ENCODE measurements at regions of chr15 and their contacts with region 1.

Region 1: GRCh38 chr15:66851226-66852071 is 149.4 kb downstream of the SMAD6 start:
- DNase-seq: peak; percentile 89
- H3K4me3 ChIP-seq: peak overlapping the region in 1 of 2 experiments; percentile 44; a peak in 1 of 4 replicates
- H3K27ac ChIP-seq: peak overlapping the region; percentile 34 to 42; a peak in 3 of 4 replicates
- H3K4me1 ChIP-seq: peaks cover 6 to 15% of the 10 kb centered on the region in 2 experiments; a peak in 2 of 4 replicates
- H3K27me3 ChIP-seq: no peaks in the 10 kb centered on the region
- CTCF ChIP-seq: peak; percentile 71
- EP300 ChIP-seq: no peak
- RAD21 ChIP-seq: peak; percentile 61

Region 2: DNA sequence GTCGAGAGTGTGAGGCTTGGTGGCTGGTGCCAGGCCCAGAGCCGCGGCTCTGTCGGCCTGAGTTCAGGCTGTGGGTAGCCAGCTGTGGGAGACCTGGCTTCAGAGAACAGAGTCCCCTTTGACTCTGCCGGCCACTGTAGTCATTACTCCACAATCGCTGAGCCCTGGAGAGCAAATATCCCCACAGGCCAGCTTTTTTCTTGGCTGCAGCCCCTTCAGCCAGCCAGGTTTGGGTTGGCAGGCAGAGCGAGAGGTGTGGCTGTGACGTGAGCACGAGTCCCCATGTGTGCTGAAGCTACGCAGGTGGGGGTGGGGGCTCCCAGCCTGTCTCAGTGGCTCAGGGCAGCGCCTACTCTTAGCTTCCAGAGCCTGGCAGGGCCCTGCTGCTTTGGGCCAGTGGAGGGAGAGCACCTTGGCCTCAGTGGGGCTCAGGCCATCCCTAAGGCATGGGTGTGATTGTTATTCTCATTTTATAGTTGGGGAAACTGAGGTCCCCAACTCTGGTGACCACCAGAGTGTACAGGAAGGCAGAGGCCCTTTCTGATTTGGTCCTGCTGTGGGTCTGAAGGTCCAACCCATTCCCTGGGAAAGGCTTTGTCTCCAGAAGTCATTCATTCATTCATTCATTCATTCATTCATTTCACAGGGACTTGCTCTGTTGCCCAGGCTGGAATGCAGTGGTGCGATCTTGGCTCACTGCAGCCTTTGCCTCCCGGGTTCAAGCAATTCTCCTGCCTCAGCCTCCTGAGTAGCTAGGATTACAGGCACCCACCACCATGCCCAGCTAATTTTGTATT is 240.0 kb before region 1 on chr15:
- CTCF ChIA-PET with region 1: interaction called, 84 read pairs
- POLR2A ChIA-PET with region 1: no interaction called
- DNase-seq: no peak
- H3K4me3 ChIP-seq: no peak overlapping the region
- H3K27ac ChIP-seq: no peak overlapping the region
- H3K4me1 ChIP-seq: peaks cover 0 to 2% of the 10 kb centered on the region in 2 experiments; a peak in 1 of 4 replicates
- H3K27me3 ChIP-seq: no peaks in the 10 kb centered on the region
- CTCF ChIP-seq: no peak
- EP300 ChIP-seq: no peak
- RAD21 ChIP-seq: no peak

Region 3: DNA sequence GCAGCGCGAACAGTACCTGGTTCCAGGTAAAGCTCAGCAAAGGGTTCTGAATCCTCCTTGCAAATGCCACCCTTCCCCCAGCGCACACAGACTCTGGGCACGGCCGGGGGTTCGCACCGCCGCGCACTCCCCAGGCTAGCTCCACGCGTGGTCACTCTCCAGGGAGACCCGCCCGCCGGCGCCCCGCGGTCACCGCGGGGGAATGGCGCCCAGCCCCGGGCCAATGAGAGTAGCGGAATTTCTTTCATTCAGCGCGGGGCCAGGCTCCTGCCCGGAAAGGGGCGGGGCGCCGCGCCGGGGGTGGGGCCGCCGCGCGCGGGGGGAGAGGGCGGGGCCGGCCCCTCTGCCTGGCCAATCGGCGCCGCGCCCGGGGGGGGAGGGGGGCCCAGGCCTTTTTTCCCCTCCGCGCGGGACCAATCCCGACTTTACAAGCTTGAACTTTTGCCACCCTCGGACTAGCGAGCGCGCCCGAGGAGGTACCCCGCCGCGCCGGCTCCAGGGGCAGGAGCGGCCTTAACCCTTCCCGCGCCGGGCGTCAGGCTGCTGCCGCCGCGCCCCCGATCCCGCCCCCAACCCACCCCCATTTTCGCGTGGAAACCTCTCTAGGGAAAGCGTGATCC is 150.5 kb before region 1 on chr15:
- CTCF ChIA-PET with region 1: interaction called, 25 read pairs
- POLR2A ChIA-PET with region 1: no interaction called
- DNase-seq: peak; percentile 98
- H3K4me3 ChIP-seq: peak overlapping the region; percentile 68 to 73
- H3K27ac ChIP-seq: peak overlapping the region; percentile 89
- H3K4me1 ChIP-seq: peaks cover 23 to 24% of the 10 kb centered on the region in 2 experiments; a peak in 3 of 4 replicates
- H3K27me3 ChIP-seq: no peaks in the 10 kb centered on the region
- CTCF ChIP-seq: no peak
- EP300 ChIP-seq: peak in 1 of 2 experiments; percentile 24; a peak in 1 of 4 replicates
- RAD21 ChIP-seq: no peak

Region 4: GRCh38 chr15:66774001-66774814 is 77.2 kb before region 1 on chr15:
- CTCF ChIA-PET with region 1: interaction called, 45 read pairs
- POLR2A ChIA-PET with region 1: no interaction called
- DNase-seq: peak; percentile 95
- H3K4me3 ChIP-seq: peak overlapping the region in 1 of 2 experiments; percentile 19; a peak in 1 of 4 replicates
- H3K27ac ChIP-seq: peak overlapping the region; percentile 62 to 81
- H3K4me1 ChIP-seq: peaks cover 31 to 50% of the 10 kb centered on the region in 2 experiments
- H3K27me3 ChIP-seq: no peaks in the 10 kb centered on the region
- CTCF ChIP-seq: peak; percentile 92
- EP300 ChIP-seq: no peak
- RAD21 ChIP-seq: peak; percentile 92

Region 5: GRCh38 chr15:66824424-66824823 is 27.0 kb before region 1 on chr15:
- CTCF ChIA-PET with region 1: interaction called, 20 read pairs
- POLR2A ChIA-PET with region 1: no interaction called
- DNase-seq: no peak
- H3K4me3 ChIP-seq: no peak overlapping the region
- H3K27ac ChIP-seq: no peak overlapping the region
- H3K4me1 ChIP-seq: peaks cover 7 to 12% of the 10 kb centered on the region in 2 experiments; a peak in 3 of 4 replicates
- H3K27me3 ChIP-seq: no peaks in the 10 kb centered on the region
- CTCF ChIP-seq: no peak
- EP300 ChIP-seq: no peak
- RAD21 ChIP-seq: no peak

Region 6: DNA sequence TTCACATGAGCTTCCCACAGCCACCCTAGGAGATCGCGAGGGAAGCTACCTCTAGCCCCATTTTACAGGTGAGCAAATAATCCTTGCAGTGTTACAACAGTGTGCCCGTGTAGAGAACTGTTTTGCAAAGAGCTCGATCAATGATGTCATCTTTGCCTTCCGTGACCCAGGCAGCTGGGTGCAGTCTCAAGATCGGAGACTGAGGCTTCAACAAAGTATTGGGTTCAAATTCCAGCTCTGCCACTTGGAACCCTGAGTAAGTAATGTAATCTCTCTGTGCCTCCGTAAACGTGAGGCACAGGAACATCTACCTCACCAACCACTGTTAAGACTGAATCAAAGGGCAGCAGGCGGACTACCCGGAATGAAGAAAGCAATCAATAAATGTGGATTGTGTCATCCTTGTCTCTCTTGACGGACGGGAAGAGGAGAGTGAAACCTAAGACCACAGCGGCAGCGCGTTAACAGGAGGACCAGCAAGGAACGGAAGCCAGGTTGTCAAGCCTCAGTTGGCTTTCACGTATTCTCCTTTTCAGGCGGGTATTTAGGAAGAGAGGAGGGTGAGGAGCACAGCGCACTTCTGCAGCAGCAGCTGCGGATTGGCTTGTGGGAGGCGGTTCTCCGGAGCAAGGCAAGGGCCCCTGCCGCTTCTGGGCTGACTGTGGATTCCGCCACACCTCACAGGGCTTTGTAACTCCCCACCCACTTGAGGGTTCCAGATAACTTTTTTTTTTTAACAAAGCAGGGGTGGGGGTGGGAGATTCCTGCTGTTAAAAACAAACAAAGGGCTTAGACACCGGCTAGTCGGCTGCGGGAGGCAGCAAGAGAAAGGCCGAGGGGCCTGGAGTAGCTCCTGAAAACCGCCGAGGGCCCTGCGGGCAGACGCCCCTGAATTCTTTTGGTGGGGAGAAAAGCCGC is 212.5 kb after region 1 on chr15:
- CTCF ChIA-PET with region 1: no interaction called
- POLR2A ChIA-PET with region 1: no interaction called
- DNase-seq: no peak
- H3K4me3 ChIP-seq: no peak overlapping the region
- H3K27ac ChIP-seq: no peak overlapping the region
- H3K4me1 ChIP-seq: peaks cover 7 to 15% of the 10 kb centered on the region in 2 experiments; a peak in 2 of 4 replicates
- H3K27me3 ChIP-seq: no peaks in the 10 kb centered on the region
- CTCF ChIP-seq: no peak
- EP300 ChIP-seq: no peak
- RAD21 ChIP-seq: no peak

Measured in SK-N-SH (cell line).